Heart left ventricle (tissue), 16 donors: ENCODE measurements at regions of chr12 and their contacts with region 1.

Region 1: GRCh38 chr12:120228291-120229070 is 27.6 kb upstream of the RPLP0 start:
- DNase-seq: peak; percentile 88 to 93 (median 89)
- ATAC-seq: peak; percentile 61 to 67 (median 62)
- H3K4me3 ChIP-seq: peak overlapping the region in 9 of 12 donors; percentile 1 to 26 (median 16)
- H3K27ac ChIP-seq: peak overlapping the region; percentile 18 to 97 (median 92)
- H3K4me1 ChIP-seq: peaks cover 49 to 96% (median 88%) of the 10 kb centered on the region in 12 donors
- H3K27me3 ChIP-seq: no peaks in the 10 kb centered on the region
- CTCF ChIP-seq: peak; percentile 89 to 98 (median 94)
- POLR2A ChIP-seq: no peak

Region 2: GRCh38 chr12:119461636-119462214 is 766.8 kb before region 1 on chr12:
- intact Hi-C with region 1: no loop called
- DNase-seq: peak in 1 of 5 donors; percentile 35
- ATAC-seq: peak in 3 of 4 donors; percentile 44 to 59 (median 55)
- H3K4me3 ChIP-seq: no peak overlapping the region
- H3K27ac ChIP-seq: no peak overlapping the region
- H3K4me1 ChIP-seq: peaks cover 0 to 11% (median 0%) of the 10 kb centered on the region in 12 donors
- H3K27me3 ChIP-seq: no peaks in the 10 kb centered on the region
- CTCF ChIP-seq: no peak
- POLR2A ChIP-seq: no peak

Region 3: GRCh38 chr12:119857041-119857591 is 371.4 kb before region 1 on chr12:
- intact Hi-C with region 1: no loop called
- DNase-seq: no peak
- ATAC-seq: no peak
- H3K4me3 ChIP-seq: no peak overlapping the region
- H3K27ac ChIP-seq: no peak overlapping the region
- H3K4me1 ChIP-seq: no peaks in the 10 kb centered on the region
- H3K27me3 ChIP-seq: no peaks in the 10 kb centered on the region
- CTCF ChIP-seq: no peak
- POLR2A ChIP-seq: no peak

Region 4: DNA sequence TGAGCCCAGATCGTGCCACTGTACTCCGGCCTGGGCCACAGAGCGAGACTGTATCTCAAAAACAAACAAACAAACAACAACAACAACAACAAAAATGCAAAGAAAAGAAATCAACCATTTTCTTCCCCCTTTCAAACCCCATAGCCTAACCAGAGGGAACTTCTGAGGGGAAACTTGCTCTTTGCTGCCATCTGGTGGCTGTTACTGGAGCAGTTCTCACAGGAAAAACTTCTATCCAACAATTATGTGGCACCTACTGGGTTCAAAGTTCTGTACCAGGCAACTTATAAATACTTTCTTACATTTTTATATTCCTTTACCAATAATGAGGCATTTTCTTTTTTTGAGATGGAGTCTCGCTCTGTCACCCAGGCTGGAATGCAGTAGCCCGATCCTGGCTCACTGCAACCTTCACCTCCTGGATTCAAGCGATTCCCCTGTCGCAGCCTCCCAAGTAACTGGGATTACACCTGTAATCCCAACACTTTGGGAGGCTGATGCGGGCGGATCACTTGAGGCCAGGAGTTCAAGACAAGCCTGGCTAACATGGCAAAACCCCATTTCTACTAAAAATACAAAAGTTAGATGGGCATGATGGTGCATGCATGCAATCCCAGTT is 290.3 kb before region 1 on chr12:
- intact Hi-C with region 1: no loop called
- DNase-seq: peak in 4 of 5 donors; percentile 18 to 39 (median 28)
- ATAC-seq: peak in 3 of 4 donors; percentile 36 to 49 (median 47)
- H3K4me3 ChIP-seq: no peak overlapping the region
- H3K27ac ChIP-seq: no peak overlapping the region
- H3K4me1 ChIP-seq: no peaks in the 10 kb centered on the region
- H3K27me3 ChIP-seq: peaks cover 0 to 9% (median 0%) of the 10 kb centered on the region in 9 donors
- CTCF ChIP-seq: peak; percentile 73 to 89 (median 84)
- POLR2A ChIP-seq: no peak

Region 5: DNA sequence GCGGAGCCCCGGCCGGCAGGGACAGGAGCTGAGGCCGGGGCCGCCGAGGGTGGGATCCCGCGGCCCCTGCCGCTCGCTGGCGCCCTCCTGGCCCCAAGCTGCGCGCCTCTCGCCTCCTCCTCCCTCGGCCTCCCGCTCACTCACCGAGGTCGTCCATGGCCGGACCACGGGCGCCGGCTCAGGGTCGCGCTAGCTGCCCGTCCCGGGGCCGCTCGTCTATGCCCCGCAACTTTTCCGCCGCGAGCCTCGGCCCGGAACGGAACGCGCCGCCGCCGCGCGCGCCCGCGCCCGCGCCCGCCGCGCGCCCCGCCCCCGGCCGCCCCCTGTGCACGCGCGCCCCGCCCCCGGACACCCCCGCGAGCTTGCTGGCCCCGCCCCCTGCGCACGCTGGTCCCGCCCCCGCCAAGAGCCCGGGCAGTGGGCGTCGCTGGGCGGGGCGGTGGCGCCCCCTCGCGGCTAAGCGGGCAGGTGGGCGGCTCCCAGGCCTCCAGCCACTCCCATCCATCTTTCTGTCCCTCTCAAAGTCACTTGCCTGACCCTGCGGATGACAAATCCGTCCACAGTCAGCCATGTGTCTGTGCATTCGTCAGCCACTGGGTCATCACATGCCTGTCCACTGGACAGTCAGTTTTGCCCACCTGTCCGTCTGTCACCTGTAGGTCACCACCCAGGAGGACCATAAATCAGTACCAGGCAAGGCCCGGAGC is 37.1 kb after region 1 on chr12 and contains the start of gene PXN:
- intact Hi-C with region 1: loop called (anchors 1 to 2 kb)
- DNase-seq: peak; percentile 88 to 96 (median 91)
- ATAC-seq: peak; percentile 45 to 92 (median 85)
- H3K4me3 ChIP-seq: peak within 1 kb of the TSS; percentile 91 to 100 (median 98)
- H3K27ac ChIP-seq: peak within 1 kb of the TSS; percentile 88 to 99 (median 97)
- H3K4me1 ChIP-seq: peaks cover 7 to 47% (median 39%) of the 10 kb centered on the region in 12 donors
- H3K27me3 ChIP-seq: no peaks in the 10 kb centered on the region
- CTCF ChIP-seq: peak; percentile 79 to 95 (median 89)
- POLR2A ChIP-seq: peak in 1 of 2 donors; percentile 80
- total RNA-seq, gene PXN: 34.3 to 103 (median 69.9) TPM

Region 6: GRCh38 chr12:120292661-120293531 is 64.4 kb after region 1 on chr12 and contains the start of gene RNU4-1:
- intact Hi-C with region 1: loop called in 1 of 10 experiments (anchors 2 kb)
- DNase-seq: peak in 4 of 5 donors; percentile 65 to 79 (median 70)
- ATAC-seq: peak; percentile 32 to 62 (median 49)
- H3K4me3 ChIP-seq: peak within 1 kb of the TSS; percentile 45 to 76 (median 62)
- H3K27ac ChIP-seq: peak within 1 kb of the TSS; percentile 95 to 100 (median 98)
- H3K4me1 ChIP-seq: peaks cover 0 to 27% (median 10%) of the 10 kb centered on the region in 12 donors
- H3K27me3 ChIP-seq: no peaks in the 10 kb centered on the region
- CTCF ChIP-seq: no peak
- POLR2A ChIP-seq: peak; percentile 23 to 51
- total RNA-seq, gene RNU4-1: 376 to 4,299 (median 1,541) TPM in 7 of 9 donors, not detected in the others